ENCODE measurements at regions of chr1 and their contacts with region 1.

Region 1: DNA sequence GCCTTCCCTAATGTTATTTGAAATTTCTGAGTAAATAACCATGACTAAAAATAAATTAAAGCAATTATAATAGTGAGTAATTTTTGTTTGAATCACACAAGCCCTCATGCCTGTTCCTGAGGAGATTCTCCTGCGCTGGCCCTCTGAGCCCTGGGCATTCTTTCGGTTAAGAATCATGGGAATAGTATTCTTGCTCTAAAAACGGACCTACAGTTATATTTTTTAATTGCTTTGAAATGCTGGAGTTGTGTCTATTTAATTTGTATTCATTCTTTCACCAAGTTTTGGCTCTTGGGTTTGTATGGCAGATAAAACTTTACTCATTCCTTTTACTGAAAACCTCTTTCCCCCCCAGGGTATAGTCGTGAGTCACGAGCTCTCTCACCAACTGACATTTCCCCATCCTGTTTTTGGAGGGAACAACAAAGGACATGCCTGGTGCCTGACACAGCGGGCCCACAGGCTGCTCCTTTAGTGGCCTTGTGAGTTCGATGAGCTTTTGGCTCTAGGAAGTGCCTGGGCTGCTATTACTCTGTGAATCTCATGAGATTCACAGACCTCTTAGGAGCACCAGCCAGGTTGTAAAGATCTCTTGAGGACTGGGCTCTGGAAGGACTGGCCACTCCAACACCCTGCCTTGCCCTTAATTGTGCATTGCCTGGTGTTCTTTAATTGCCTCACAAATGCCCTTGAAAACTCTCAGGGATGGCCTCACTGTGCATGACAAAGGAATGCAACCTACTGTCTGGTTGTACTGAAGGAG is 58.6 kb downstream of the DDR2 start:
- DNase-seq: peak; percentile 70
- ATAC-seq: peak; percentile 67

Region 2: GRCh38 chr1:162633081-162633762 is 57.6 kb before region 1 on chr1:
- intact Hi-C with region 1: loop called (anchors 5 kb)
- DNase-seq: no peak
- ATAC-seq: peak; percentile 58

Region 3: DNA sequence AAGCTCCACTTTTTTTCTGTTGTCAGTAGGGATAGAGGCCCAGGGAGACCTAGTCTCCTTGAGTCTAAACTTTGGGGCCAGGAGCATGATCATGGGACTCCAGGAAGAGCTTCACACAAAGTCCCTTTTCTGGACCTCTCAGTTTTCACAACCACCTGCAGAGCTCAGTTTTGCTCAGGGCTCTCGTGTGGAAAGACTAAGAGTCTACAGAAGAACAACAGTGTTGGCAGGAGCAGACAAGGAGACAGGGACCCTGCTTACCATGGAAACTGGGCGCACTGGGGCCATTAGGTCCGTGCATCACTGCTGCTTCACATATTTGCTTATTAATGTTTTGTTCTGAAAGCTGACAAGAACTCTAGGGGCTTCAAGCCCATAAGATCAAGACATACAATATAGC is 35.7 kb after region 1 on chr1:
- intact Hi-C with region 1: no loop called
- DNase-seq: no peak
- ATAC-seq: no peak

Measured in Right ventricle myocardium superior (tissue), 1 donor.